ENCODE measurements at regions of chr10 and their contacts with region 1.

Region 1: DNA sequence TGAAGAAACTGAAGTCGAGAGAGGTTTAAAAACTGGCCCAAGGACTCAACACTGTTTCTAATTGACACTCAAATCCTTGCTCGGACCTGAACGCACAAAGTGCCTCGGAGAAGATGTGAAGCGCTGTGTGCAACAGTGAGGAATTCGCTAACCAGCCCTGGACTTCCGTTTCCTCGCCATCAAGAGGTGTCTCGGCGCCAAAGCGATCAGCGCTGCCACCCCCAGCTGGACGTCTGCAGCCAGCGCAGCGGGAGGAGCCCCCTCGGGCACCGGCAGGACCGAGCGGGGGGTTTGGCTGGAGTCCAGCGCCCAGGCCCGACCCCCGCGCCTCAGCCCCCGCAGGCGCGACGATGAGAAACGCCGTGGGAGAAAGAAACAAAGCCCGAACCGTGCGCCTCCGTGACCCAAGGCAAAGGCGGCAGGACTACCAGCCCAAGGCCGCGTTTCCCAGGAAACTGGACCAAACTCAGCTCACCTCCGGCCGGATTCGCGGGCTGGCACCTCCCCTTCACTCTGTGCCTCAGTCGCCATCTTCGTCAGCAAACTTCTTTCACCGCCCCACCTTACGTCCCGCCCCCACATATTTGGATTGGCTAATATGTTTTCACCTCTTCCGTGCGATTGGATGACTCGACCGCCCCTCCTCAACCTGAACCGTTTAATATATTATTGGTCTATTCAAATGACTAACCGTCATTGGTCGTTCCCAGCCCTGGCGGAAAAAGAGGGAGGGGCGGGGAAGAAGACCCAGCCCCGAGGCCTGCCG is at the start of gene ARHGAP19:
- DNase-seq: peak; percentile 97
- ATAC-seq: peak; percentile 99
- H3K4me3 Mint-ChIP-seq: peak within 1 kb of the TSS; percentile 93
- H3K27ac Mint-ChIP-seq: peak within 1 kb of the TSS; percentile 87
- H3K4me1 Mint-ChIP-seq: peaks cover 20% of the 10 kb centered on the region
- H3K27me3 Mint-ChIP-seq: peaks cover 2% of the 10 kb centered on the region
- total RNA-seq, gene ARHGAP19: 55.9 to 70.2 TPM

Region 2: GRCh38 chr10:97222326-97222961 is 69.8 kb before region 1 on chr10:
- CTCF ChIA-PET with region 1: no interaction called
- POLR2A ChIA-PET with region 1: no interaction called
- intact Hi-C with region 1: loop called in 1 of 2 experiments (anchors 2 kb)
- DNase-seq: no peak
- ATAC-seq: no peak
- H3K4me3 Mint-ChIP-seq: no peak overlapping the region
- H3K27ac Mint-ChIP-seq: no peak overlapping the region
- H3K4me1 Mint-ChIP-seq: peaks cover 27% of the 10 kb centered on the region
- H3K27me3 Mint-ChIP-seq: no peaks in the 10 kb centered on the region

Region 3: DNA sequence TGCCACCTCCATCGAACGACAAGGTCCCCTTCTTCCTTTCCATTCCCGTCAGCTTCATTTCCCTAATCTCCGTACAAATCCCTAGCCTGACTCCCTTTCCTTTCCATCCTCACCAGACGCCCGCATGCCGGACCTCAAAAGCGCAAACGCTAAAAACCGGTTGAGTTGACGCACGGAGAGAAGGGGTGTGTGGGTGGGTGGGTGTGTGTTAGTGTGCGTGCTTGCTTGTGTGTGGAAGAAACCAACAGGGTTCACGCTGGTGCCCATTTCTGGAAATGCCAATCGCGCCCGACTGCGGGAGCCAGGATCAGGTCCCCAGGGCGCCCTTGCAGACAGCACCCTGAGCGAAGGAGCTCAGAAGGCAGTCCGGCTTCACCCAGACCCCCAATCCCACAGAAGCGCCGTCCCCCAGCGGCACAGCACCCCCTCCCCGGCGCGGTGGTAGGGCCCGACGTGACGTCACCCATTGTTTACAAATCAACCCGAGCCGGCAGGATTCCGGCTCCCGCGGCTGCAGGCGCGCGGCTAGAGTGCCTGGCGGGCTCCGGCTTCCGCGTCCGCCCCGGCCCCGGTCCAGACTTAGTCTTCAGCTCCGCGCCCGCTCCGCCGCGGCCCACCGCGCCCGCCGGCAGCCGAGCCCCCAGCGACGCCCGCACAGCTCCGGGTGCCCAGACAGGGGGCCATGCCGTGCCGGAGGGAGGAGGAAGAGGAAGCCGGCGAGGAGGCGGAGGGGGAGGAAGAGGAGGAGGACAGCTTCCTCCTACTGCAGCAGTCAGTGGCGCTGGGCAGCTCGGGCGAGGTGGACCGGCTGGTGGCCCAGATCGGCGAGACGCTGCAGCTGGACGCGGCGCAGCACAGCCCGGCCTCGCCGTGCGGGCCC is 26.7 kb after region 1 on chr10 and contains the start of gene FRAT1:
- CTCF ChIA-PET with region 1: interaction called, 6 read pairs
- POLR2A ChIA-PET with region 1: interaction called, 4 read pairs
- intact Hi-C with region 1: loop called (anchors 1 to 2 kb)
- DNase-seq: peak; percentile 92
- ATAC-seq: peak; percentile 64
- H3K4me3 Mint-ChIP-seq: peak within 1 kb of the TSS; percentile 91
- H3K27ac Mint-ChIP-seq: peak within 1 kb of the TSS; percentile 99
- H3K4me1 Mint-ChIP-seq: peaks cover 29% of the 10 kb centered on the region
- H3K27me3 Mint-ChIP-seq: no peaks in the 10 kb centered on the region
- total RNA-seq, gene FRAT1: 1.3 to 1.8 TPM

Region 4: GRCh38 chr10:97400665-97401454 is 108.6 kb after region 1 on chr10 and contains the start of gene RRP12:
- CTCF ChIA-PET with region 1: interaction called, 3 read pairs
- POLR2A ChIA-PET with region 1: interaction called, 5 read pairs
- intact Hi-C with region 1: loop called in 1 of 2 experiments (anchors 1 kb)
- DNase-seq: peak; percentile 89
- ATAC-seq: peak; percentile 99
- H3K4me3 Mint-ChIP-seq: peak within 1 kb of the TSS; percentile 96
- H3K27ac Mint-ChIP-seq: peak within 1 kb of the TSS; percentile 85
- H3K4me1 Mint-ChIP-seq: peaks cover 7% of the 10 kb centered on the region
- H3K27me3 Mint-ChIP-seq: no peaks in the 10 kb centered on the region
- total RNA-seq, gene RRP12: 45.9 to 49.4 TPM

Region 5: DNA sequence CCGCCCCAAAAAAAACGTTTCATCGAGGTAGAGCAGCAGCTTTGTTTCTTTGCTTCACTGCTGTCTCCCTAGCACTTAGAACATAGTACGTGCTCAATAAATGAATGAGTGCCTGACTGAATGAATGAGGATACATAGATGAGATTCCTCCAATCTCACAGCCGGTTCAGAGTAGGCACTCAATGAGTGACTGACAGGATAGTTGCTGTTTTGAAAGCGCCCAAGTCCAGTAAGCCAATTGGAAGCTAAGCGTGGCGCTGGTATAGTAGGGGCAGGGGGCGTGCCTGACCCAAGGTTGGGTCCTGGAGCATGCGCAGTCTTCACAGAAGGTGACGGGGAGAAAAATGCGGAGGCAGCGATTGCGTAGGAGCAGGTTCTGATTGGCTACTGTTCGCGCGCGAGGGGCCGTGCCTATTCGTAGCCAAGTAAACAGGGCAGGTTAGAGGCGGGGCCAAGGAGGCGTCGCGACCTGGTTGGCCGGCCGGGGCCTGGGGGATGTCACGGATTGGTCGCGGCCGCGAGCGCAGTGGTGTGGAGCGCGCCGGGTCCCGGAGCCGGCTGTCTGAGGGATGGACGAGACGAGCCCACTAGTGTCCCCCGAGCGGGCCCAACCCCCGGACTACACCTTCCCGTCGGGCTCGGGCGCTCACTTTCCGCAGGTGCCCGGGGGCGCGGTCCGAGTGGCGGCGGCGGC is 348.0 kb after region 1 on chr10 and contains the start of gene PI4K2A:
- CTCF ChIA-PET with region 1: no interaction called
- POLR2A ChIA-PET with region 1: no interaction called
- intact Hi-C with region 1: loop called in 1 of 2 experiments (anchors 1 kb)
- DNase-seq: peak; percentile 100
- ATAC-seq: peak; percentile 99
- H3K4me3 Mint-ChIP-seq: peak within 1 kb of the TSS; percentile 97
- H3K27ac Mint-ChIP-seq: peak within 1 kb of the TSS; percentile 93
- H3K4me1 Mint-ChIP-seq: peaks cover 18% of the 10 kb centered on the region
- H3K27me3 Mint-ChIP-seq: no peaks in the 10 kb centered on the region
- total RNA-seq, gene PI4K2A: 8.5 to 8.9 TPM